ENCODE measurements at regions of chr1 and their contacts with region 1.

Region 1: GRCh38 chr1:116360429-116361173 is 12.4 kb upstream of the ATP1A1 start:
- DNase-seq: peak in 1 of 3 donors; percentile 37
- ATAC-seq: peak; percentile 57
- H3K4me3 ChIP-seq: no peak overlapping the region
- H3K4me1 ChIP-seq: no peaks in the 10 kb centered on the region
- CTCF ChIP-seq: no peak

Region 2: DNA sequence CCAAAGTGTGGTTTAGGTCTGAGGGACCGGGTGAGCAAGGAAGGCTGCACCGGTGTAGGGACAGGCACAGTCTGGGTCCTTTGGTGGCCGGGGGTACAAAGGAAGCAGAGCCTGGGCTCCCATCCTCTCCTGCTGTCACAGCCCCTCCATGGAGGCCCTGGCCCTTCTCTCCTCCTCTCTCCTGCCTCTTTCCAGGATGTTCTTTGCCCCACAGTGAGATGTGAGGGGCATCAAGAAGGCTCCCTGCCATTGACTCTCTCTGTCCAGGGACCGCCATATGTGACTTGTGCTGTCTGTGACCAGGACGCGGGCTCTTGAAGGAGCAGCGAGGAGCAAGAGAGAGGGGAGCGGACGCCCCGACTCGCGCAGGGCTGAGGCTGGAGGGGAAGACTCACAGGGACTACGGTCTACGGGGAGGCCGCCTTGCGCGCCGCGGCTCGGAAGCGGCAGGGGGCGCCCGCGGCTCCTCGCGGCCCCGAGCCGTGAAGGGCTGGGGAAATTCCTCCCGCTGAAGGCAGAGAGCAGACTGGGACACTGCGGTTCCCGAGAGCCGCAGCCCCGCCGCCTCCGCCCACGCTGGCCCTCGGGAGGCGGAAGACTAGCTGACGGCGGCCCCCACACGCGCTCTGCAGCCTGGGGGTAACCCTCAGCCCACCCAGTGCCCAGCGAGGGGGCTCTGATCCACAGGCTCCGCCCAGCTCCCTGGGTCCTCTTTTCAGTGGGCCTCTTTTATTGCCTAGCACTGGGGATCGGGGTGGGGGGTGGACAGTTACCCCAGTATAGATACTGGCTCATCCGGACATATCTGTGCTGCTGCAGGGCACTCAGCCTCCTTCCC is 208.6 kb before region 1 on chr1:
- intact Hi-C with region 1: no loop called
- DNase-seq: peak; percentile 77 to 90 (median 87)
- ATAC-seq: peak; percentile 94
- H3K4me3 ChIP-seq: no peak overlapping the region
- H3K4me1 ChIP-seq: peaks cover 20% of the 10 kb centered on the region
- CTCF ChIP-seq: peak; percentile 91

Region 3: DNA sequence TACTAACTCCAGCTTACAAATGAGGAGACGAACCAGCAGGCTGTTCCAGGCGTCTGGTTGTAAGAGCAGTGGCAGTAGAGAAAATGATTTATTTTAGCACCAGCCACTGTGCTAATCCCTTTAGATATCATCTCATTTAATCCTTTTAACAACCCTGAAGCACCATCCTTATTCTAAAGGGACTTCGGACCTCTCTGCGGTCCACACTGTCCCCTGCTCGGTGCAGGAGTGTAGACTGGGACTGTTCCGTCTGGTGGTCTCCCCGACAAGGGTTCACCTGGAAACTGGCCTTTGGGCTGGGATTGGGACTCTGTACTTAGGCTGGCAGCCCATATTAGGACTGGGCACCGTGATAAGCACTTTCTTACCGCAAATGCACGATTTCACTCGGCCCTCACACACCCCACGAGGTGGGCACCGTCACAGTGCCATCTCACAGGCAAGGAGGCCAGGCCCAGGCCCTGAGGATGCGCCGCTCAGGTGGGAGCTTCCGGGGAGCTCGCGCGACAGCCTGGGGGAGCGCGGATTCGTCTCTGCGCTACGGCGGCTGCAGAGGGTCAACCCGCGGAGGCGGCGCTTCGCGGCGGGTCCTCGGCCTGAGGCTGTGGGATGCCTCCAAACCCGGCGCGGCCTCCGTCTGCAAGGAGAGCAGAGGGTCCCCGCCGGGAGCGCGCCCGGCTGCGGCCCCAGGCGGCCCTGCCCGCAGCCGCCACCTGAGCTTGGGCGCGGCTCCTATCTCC is 57.7 kb after region 1 on chr1:
- intact Hi-C with region 1: loop called in 1 of 2 experiments (anchors 5 kb)
- DNase-seq: peak; percentile 84 to 92 (median 91)
- ATAC-seq: peak; percentile 97
- H3K4me3 ChIP-seq: peak overlapping the region; percentile 38
- H3K4me1 ChIP-seq: peaks cover 10% of the 10 kb centered on the region
- CTCF ChIP-seq: no peak

Measured in mucosa of descending colon (tissue), 3 donors.